ENCODE measurements at regions of chr3 and their contacts with region 1.

Region 1: DNA sequence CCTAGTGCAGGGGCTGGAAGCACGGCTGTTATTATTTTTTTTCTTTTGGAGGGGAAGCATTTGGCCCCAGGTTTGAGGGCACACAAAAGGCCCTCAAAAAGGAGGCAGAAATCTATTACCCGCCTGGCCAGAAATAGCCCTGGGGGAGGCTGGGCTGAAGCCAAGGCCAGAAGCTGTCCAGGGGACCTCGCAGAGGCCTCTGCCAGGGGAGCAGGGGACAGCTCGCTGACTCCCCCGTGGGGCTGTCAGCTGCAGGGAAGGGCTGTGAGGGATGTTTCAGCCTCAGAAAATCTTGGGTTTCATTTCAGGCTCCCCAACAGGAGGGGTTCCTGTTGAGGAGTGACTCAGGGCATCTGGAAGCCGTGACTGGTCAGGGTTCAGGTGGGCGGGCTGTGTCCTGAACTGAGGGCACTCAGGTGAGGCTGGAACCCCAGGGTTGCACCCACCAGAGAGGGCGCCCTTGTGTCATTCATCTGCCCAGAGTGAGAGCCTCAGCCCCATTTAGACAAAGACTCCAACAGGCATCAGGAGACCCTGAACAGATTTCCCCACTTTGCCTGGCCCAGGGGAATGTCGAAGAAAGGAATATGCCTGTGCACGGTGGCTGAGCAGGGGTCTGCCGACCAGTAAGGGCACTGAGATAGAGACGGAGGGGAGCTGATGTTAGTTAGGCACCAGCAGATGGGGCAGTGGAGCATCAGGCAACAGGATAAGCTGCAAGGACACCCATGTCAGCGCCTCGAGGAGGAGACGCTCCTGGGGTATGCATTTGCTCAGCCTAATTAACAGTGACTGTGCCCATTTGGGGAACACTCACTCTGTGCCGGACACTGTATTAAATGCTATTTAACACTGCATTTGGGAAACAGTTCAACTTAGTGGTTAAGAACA is 43.5 kb upstream of the SLC6A11 start:
- DNase-seq: peak in 1 of 2 experiments; percentile 27
- H3K4me3 ChIP-seq: no peak overlapping the region
- H3K4me3 Mint-ChIP-seq: no peak overlapping the region
- H3K27ac Mint-ChIP-seq: no peak overlapping the region
- H3K4me1 ChIP-seq: no peaks in the 10 kb centered on the region
- H3K4me1 Mint-ChIP-seq: no peaks in the 10 kb centered on the region
- H3K27me3 ChIP-seq: no peaks in the 10 kb centered on the region
- H3K27me3 Mint-ChIP-seq: peaks cover 2% of the 10 kb centered on the region
- CTCF ChIP-seq: peak in 1 of 2 experiments; percentile 44

Region 2: GRCh38 chr3:9600597-9600996 is 1171.9 kb before region 1 on chr3:
- CTCF ChIA-PET with region 1: no interaction called
- POLR2A ChIA-PET with region 1: no interaction called
- intact Hi-C with region 1: no loop called
- DNase-seq: no peak
- H3K4me3 ChIP-seq: no peak overlapping the region
- H3K4me3 Mint-ChIP-seq: no peak overlapping the region
- H3K27ac Mint-ChIP-seq: no peak overlapping the region
- H3K4me1 ChIP-seq: no peaks in the 10 kb centered on the region
- H3K4me1 Mint-ChIP-seq: no peaks in the 10 kb centered on the region
- H3K27me3 ChIP-seq: no peaks in the 10 kb centered on the region
- H3K27me3 Mint-ChIP-seq: no peaks in the 10 kb centered on the region
- CTCF ChIP-seq: no peak

Region 3: GRCh38 chr3:10334459-10334858 is 438.1 kb before region 1 on chr3:
- CTCF ChIA-PET with region 1: no interaction called
- POLR2A ChIA-PET with region 1: no interaction called
- intact Hi-C with region 1: no loop called
- DNase-seq: no peak
- H3K4me3 ChIP-seq: no peak overlapping the region
- H3K4me3 Mint-ChIP-seq: no peak overlapping the region
- H3K27ac Mint-ChIP-seq: no peak overlapping the region
- H3K4me1 ChIP-seq: 0 out of 2 replicates have a peak, but pooled peaks cover 3% of the 10 kb centered on the region
- H3K4me1 Mint-ChIP-seq: no peaks in the 10 kb centered on the region
- H3K27me3 ChIP-seq: no peaks in the 10 kb centered on the region; the same call in none of the 2 replicates
- H3K27me3 Mint-ChIP-seq: peaks cover 11% of the 10 kb centered on the region
- CTCF ChIP-seq: peak; percentile 29 to 31

Region 4: GRCh38 chr3:10485380-10485779 is 287.1 kb before region 1 on chr3:
- CTCF ChIA-PET with region 1: no interaction called
- POLR2A ChIA-PET with region 1: no interaction called
- intact Hi-C with region 1: no loop called
- DNase-seq: no peak
- H3K4me3 ChIP-seq: no peak overlapping the region
- H3K4me3 Mint-ChIP-seq: no peak overlapping the region
- H3K27ac Mint-ChIP-seq: no peak overlapping the region
- H3K4me1 ChIP-seq: no peaks in the 10 kb centered on the region
- H3K4me1 Mint-ChIP-seq: no peaks in the 10 kb centered on the region
- H3K27me3 ChIP-seq: no peaks in the 10 kb centered on the region
- H3K27me3 Mint-ChIP-seq: peaks cover 14% of the 10 kb centered on the region
- CTCF ChIP-seq: no peak

Region 5: GRCh38 chr3:10883478-10884234 is 111.1 kb after region 1 on chr3:
- CTCF ChIA-PET with region 1: interaction called, 4 read pairs
- POLR2A ChIA-PET with region 1: no interaction called
- intact Hi-C with region 1: loop called (anchors 1 kb)
- DNase-seq: peak in 1 of 2 experiments; percentile 26
- H3K4me3 ChIP-seq: no peak overlapping the region
- H3K4me3 Mint-ChIP-seq: no peak overlapping the region
- H3K27ac Mint-ChIP-seq: no peak overlapping the region
- H3K4me1 ChIP-seq: no peaks in the 10 kb centered on the region
- H3K4me1 Mint-ChIP-seq: no peaks in the 10 kb centered on the region
- H3K27me3 ChIP-seq: no peaks in the 10 kb centered on the region; the same call in 1 of the 2 replicates
- H3K27me3 Mint-ChIP-seq: peaks cover 19% of the 10 kb centered on the region
- CTCF ChIP-seq: peak; percentile 36 to 61

Measured in Caco-2 (cell line).